ENCODE measurements at regions of chr5 and their contacts with region 1.

Region 1: GRCh38 chr5:169197343-169197742 is 103.6 kb downstream of the SLIT3 start:
- DNase-seq: peak in 3 of 10 donors; percentile 41 to 52 (median 52)
- H3K4me3 ChIP-seq: no peak overlapping the region
- H3K27ac ChIP-seq: no peak overlapping the region
- H3K27me3 ChIP-seq: no peaks in the 10 kb centered on the region
- CTCF ChIP-seq: peak in 24 of 56 donors; percentile 5 to 67 (median 28)

Region 2: DNA sequence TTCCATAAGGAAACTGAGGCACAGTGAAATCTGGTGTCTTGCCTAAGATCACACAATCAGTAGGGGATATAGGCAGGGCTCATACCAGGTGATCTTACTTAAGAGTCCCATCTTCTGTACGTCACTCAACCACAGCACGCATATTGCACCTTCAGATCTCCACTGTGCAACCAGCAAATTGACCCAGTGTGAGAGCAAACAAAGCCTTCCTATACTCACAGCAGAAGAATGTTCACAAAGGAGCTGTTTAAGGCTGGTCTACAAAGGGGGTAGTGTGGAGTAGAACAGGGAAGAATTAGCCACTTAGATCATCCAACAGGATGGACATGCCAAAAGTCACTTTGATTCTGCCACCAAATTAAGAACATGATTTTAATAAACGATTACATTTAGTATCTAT is 202.3 kb before region 1 on chr5:
- intact Hi-C with region 1: loop called in 1 of 2 experiments (anchors 5 kb)
- DNase-seq: no peak
- H3K4me3 ChIP-seq: no peak overlapping the region
- H3K27ac ChIP-seq: peak overlapping the region in 27 of 59 donors; percentile 4 to 70 (median 51)
- H3K27me3 ChIP-seq: peaks cover 0 to 2% (median 0%) of the 10 kb centered on the region in 45 donors
- CTCF ChIP-seq: peak in 3 of 56 donors; percentile 9 to 14 (median 14)

Region 3: DNA sequence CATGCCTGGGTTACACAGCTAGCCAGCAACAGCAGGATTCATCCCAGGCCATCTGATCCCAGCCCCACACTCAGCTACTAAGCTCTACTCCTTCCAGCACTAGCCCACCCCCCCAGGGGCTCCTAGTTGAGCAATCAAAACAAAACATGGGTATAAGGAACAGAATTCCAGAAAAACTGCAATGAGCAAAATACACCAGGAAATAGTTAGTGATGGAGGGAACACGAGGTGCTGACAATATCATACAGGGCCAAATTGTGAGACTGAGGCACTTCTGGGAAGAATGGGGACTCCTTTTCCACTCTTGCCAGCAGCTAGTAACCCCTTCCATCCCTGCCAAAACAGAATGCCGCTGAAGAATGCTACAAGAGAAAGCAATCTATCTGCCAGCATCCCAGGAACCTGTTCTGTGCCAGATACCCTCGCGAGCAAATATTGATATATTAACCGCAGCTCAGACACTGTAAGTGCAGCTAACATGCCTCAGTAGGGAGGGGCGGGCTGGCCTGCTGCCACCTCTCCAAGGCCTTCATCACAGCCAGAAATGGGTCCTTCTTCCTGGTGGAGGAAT is 57.8 kb before region 1 on chr5:
- intact Hi-C with region 1: no loop called
- DNase-seq: no peak
- H3K4me3 ChIP-seq: no peak overlapping the region
- H3K27ac ChIP-seq: no peak overlapping the region
- H3K27me3 ChIP-seq: no peaks in the 10 kb centered on the region
- CTCF ChIP-seq: no peak

Region 4: GRCh38 chr5:169325273-169325672 is 127.9 kb after region 1 on chr5:
- intact Hi-C with region 1: no loop called
- DNase-seq: no peak
- H3K4me3 ChIP-seq: no peak overlapping the region
- H3K27ac ChIP-seq: no peak overlapping the region
- H3K27me3 ChIP-seq: peaks cover 0 to 8% (median 0%) of the 10 kb centered on the region in 45 donors
- CTCF ChIP-seq: no peak

Measured in dorsolateral prefrontal cortex (tissue), 120 donors.